HAP-1 (cell line): ENCODE measurements at regions of chr19 and their contacts with region 1.

Region 1: DNA sequence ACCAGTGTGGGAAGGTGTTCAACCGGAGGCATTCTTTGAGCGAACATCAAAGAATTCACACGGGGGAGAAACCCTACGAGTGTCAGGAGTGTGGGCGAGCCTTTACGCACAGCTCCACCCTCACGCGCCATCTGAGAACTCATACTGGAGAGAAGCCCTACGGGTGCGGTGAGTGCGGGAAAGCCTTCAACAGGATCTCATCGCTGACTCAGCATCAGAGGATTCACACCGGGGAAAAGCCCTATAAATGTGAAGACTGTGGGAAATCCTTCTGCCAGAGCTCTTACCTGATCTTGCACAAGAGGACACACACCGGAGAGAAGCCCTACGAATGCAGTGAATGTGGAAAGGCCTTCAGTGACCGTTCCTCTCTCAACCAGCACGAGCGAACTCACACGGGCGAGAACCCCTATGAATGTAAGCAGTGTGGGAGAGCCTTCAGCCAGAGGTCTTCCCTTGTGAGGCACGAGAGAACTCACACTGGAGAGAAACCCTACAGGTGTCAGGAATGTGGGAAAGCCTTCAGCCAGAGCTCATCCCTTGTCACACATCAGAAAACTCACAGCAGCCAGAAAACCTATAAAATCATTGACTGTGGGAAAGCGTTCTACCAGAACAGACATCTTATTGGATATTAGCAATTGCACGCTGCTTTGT is 6.9 kb upstream of the ZNF555 start:
- DNase-seq: no peak
- H3K4me3 ChIP-seq: no peak overlapping the region
- H3K4me1 ChIP-seq: no peaks in the 10 kb centered on the region
- H3K27me3 ChIP-seq: no peaks in the 10 kb centered on the region

Region 2: DNA sequence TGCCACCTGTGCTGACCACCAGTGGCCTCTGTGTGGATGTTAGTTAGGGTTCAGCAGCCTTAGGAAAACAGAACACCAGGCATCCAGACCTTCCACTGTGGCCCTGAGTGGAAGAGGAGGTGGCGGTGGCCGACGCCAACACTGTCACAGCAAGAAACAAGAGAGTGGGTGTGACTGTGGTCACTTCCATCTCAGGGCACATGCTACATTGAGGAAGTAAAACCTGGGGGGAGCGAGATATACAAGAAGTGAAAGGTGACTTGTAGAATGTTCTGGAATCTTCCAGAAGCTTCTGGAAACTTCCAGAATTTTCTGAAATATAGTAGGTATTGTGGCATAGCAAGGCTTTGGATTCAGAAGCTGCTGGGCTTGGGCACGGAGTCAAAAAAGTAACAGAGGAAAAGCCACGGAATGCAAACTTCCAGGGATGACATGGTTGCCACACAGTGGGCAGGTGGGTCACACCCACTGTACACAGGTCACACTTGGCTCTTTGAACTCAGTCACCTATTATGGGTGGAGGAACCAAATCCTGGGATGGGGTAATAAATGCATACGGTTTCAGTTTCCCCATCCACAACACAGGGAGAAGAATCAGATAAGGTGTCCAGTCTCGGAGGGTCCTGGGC is 156.2 kb before region 1 on chr19:
- in situ Hi-C with region 1: no loop called
- DNase-seq: no peak
- H3K4me3 ChIP-seq: no peak overlapping the region
- H3K4me1 ChIP-seq: no peaks in the 10 kb centered on the region
- H3K27me3 ChIP-seq: no peaks in the 10 kb centered on the region

Region 3: DNA sequence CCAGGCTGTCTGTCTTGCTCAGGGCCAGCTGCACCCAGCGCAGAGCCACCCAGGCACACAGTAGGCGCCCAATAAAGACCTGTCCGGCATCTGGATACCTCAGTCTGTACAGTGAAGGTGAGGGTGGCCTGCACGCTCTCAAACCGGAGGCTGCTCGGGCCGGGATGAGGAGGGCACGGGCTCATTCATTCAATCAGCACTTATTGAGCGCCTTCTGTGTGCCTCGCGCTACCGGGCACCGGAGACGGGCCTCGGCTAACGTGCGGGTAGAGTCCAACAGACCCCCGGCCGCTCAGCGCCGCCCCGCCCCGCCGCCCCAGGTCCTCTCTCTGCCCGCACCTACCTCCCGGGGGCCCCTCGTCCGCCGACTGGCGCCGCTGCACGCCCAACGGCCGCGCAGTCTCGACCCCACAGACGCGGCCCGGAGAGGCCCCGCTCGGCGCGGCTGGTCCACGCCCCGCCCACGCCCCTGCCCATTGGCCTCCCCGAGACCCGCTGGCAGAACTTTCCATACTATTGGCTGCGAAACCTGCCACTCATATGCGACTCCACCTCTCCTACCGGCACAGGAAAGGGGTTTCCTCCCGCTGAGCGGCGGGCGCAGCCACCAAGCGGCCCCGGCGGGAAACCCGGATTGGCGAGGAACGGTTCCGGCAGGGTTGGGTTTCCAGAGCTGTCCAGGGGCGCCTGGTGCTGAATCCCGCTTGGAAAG is 94.6 kb before region 1 on chr19 and contains the start of gene SLC39A3:
- in situ Hi-C with region 1: no loop called
- DNase-seq: peak; percentile 92 to 100
- H3K4me3 ChIP-seq: peak within 1 kb of the TSS; percentile 65
- H3K4me1 ChIP-seq: no peaks in the 10 kb centered on the region
- H3K27me3 ChIP-seq: no peaks in the 10 kb centered on the region

Region 4: DNA sequence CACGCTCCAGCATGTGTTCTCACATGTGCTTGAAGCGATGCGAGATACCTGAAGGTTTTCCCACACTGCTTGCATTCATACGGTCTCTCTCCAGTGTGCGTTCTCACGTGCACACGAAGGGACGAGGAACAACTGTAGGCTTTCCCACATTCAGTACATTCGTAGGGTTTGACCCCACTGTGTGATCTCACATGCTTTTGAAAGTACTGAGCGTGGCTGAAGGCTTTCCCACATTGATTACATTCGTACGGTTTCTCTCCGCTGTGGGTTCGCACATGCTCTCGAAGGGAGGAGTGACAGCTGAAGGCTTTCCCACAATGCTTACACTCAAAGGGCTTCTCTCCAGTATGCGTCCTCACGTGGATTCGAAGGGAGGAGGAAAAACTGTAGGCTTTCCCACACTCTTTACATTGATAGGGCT is 99.2 kb after region 1 on chr19:
- in situ Hi-C with region 1: loop called (anchors 10 kb)
- DNase-seq: no peak
- H3K4me3 ChIP-seq: no peak overlapping the region
- H3K4me1 ChIP-seq: no peaks in the 10 kb centered on the region
- H3K27me3 ChIP-seq: no peaks in the 10 kb centered on the region